ENCODE measurements at regions of chr22 and their contacts with region 1.

Region 1: DNA sequence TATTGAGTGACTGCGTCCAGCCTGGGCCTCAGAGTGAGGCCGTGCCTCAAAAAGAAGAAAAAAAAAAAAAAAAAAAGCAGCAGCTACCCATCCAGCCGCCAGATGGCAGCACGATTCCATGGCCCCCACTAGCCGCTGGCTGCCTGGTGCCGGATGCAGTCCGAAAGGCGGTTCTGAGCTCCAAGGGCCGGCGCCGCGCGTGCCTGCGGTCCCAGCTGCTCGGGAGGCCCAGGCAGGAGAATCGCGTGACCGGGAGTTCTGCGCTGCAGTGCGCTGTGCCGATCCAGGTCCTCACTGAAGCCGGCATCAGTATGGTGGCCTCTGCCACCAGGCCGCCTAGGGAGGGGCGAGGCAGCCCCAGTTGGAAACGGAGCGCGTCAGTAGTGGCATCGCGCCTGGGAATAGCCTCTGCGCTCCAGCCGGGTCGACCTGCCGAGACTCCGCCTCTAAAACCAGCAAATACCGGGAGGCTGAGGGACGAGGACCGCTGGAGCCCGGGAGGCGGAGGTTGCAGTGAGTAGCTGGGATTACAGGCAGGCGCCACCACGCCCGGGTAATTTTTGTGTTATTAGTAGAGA is 19.3 kb downstream of the SCARF2 start:
- DNase-seq: peak; percentile 65 to 97 (median 84)

Region 2: DNA sequence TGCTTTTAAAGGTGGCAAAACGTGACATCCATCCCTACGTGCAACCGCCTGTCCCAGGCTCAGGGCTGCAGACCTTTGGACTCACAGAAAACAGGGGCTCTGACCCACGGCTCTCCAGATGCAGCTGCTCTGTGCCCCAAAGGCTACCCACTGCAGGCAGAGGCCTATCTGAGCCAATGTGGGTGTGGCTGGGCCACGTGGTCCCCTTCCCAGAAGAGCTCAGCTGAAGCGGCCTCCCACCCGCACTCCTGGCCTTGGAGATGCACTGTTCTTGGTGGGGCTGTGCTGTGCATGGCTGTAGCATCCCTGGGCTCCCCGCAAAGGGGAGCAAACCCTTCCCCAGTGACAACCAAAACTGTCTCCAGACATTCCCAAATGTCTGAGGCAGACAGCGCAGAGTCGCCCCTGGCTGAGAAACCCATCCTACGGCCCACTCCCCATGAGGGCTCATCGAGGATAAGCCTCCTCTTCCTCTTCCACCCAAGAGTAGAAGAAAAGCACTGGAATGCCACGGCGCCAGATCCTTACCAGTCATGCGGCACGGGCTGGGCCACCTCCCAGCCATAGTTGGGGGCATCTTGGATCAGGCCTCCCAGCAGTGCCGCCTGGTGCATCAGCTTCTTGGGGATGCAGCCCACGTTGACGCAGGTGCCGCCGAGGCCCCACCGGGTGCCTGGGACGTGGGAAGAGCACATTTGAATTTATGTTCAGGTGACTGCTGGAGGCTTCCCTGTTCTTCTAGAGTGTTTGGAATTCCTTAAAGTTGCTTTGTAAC is 499.8 kb before region 1 on chr22:
- intact Hi-C with region 1: no loop called
- DNase-seq: peak in 1 of 10 donors; percentile 64

Region 3: DNA sequence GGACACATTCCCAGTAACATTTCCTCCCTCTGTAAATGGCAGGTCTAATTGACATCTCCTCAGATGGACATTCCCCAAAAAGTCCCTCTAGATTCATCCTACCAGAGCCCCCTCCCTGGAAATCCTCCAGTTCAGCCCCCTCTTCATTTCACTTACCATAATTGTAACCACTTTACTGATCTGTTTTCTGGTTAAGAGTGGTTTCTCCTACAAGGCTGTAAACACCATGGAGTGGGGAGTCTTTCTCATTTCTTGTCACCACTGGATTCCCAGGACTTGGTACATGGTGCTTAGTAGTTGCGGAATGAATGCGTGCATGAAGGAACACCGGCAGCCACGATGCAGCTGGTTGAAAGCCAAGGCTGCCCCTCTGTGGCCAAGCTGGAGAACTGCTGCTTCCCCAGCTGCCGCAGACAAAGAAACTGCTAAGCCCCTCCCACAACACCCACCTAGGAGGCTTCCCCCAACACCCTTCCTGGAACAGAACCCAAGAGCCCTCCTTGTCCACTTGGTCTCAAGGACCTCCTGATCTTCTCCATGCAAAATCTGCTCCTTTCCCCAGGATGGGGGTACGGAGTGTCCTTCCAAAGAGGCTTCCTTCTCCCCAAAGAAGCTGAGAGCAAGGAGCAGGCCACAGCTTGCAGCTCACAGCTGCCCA is 37.9 kb after region 1 on chr22:
- intact Hi-C with region 1: loop called (anchors 1 kb)
- DNase-seq: peak; percentile 67 to 97 (median 76)

Region 4: GRCh38 chr22:20495861-20496681 is 77.8 kb after region 1 on chr22:
- intact Hi-C with region 1: loop called (anchors 1 kb)
- DNase-seq: peak; percentile 86 to 99 (median 90)

Measured in posterior cingulate gyrus (tissue), 11 donors.